ENCODE measurements at regions of chr5 and their contacts with region 1.

Region 1: GRCh38 chr5:138337685-138338410 is at the start of gene FAM53C:
- DNase-seq: peak in 3 of 4 experiments; percentile 56 to 95 (median 90)
- ATAC-seq: peak; percentile 93
- H3K4me3 ChIP-seq: peak within 1 kb of the TSS; percentile 63
- H3K27ac ChIP-seq: peak within 1 kb of the TSS; percentile 97
- H3K4me1 ChIP-seq: peaks cover 9 to 28% of the 10 kb centered on the region in 2 experiments
- H3K27me3 ChIP-seq: no peaks in the 10 kb centered on the region
- CTCF ChIP-seq: peak in 1 of 3 experiments; percentile 4; a peak in 2 of 6 replicates
- EP300 ChIP-seq: peak; percentile 15; the same call in 1 of the 2 replicates
- POLR2A ChIP-seq: peak; percentile 99
- RAD21 ChIP-seq: no peak
- polyA plus RNA-seq, gene FAM53C: 9.7 to 11.1 TPM

Region 2: GRCh38 chr5:138178516-138179276 is 159.2 kb before region 1 on chr5 and contains the starts of genes BRD8 and KIF20A:
- CTCF ChIA-PET with region 1: interaction called, 3 read pairs
- POLR2A ChIA-PET with region 1: interaction called, 17 read pairs
- in situ Hi-C with region 1: no loop called
- intact Hi-C with region 1: no loop called
- DNase-seq: peak; percentile 86 to 98 (median 91)
- ATAC-seq: peak; percentile 90
- H3K4me3 ChIP-seq: peak within 1 kb of the TSS; percentile 63
- H3K27ac ChIP-seq: peak within 1 kb of the TSS; percentile 99
- H3K4me1 ChIP-seq: peaks cover 0 to 5% of the 10 kb centered on the region in 2 experiments; a peak in 1 of 5 replicates
- H3K27me3 ChIP-seq: no peaks in the 10 kb centered on the region
- CTCF ChIP-seq: no peak; a peak in 1 of 6 replicates
- EP300 ChIP-seq: no peak
- POLR2A ChIP-seq: peak; percentile 94
- RAD21 ChIP-seq: no peak
- polyA plus RNA-seq, gene BRD8: 89.5 to 141 TPM
- polyA plus RNA-seq, gene KIF20A: 39.8 to 58.7 TPM

Region 3: GRCh38 chr5:138213161-138214029 is 124.5 kb before region 1 on chr5 and contains the start of gene CDC23:
- CTCF ChIA-PET with region 1: no interaction called
- POLR2A ChIA-PET with region 1: interaction called, 14 read pairs
- in situ Hi-C with region 1: no loop called
- intact Hi-C with region 1: no loop called
- DNase-seq: peak; percentile 93 to 99 (median 96)
- ATAC-seq: peak; percentile 98
- H3K4me3 ChIP-seq: peak within 1 kb of the TSS; percentile 88
- H3K27ac ChIP-seq: peak within 1 kb of the TSS; percentile 89
- H3K4me1 ChIP-seq: peaks cover 3 to 7% of the 10 kb centered on the region in 2 experiments; a peak in 3 of 5 replicates
- H3K27me3 ChIP-seq: no peaks in the 10 kb centered on the region
- CTCF ChIP-seq: no peak
- EP300 ChIP-seq: no peak
- POLR2A ChIP-seq: peak; percentile 96
- RAD21 ChIP-seq: no peak
- polyA plus RNA-seq, gene CDC23: 123 to 157 TPM

Region 4: DNA sequence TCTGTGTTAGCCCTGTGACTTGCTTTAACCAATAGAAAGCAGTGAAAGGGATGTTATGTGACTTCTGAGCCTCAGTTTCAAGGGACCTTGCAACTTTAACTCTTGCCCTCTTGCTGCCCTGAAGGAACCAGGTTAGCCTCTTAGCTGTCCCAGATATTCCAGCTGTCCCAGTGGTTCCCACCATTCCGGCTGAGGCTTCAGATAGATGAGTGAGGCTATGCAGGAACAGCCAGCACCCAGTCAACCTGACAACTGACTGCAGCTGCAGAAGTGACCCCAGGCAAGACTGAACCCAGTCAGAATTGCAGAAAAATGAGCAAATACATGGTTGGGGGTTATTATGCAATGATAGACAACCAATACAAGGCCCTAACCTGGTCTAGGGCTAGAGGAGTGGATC is 114.3 kb before region 1 on chr5:
- CTCF ChIA-PET with region 1: no interaction called
- POLR2A ChIA-PET with region 1: interaction called, 11 read pairs
- in situ Hi-C with region 1: no loop called
- intact Hi-C with region 1: no loop called
- DNase-seq: no peak
- ATAC-seq: no peak; the same call in 1 of the 3 replicates
- H3K4me3 ChIP-seq: no peak overlapping the region
- H3K27ac ChIP-seq: no peak overlapping the region
- H3K4me1 ChIP-seq: peaks cover 0 to 4% of the 10 kb centered on the region in 2 experiments; a peak in 2 of 5 replicates
- H3K27me3 ChIP-seq: no peaks in the 10 kb centered on the region
- CTCF ChIP-seq: no peak
- EP300 ChIP-seq: no peak
- POLR2A ChIP-seq: no peak
- RAD21 ChIP-seq: no peak

Region 5: GRCh38 chr5:138230981-138231589 is 106.8 kb before region 1 on chr5:
- CTCF ChIA-PET with region 1: no interaction called
- POLR2A ChIA-PET with region 1: interaction called, 10 read pairs
- in situ Hi-C with region 1: no loop called
- intact Hi-C with region 1: no loop called
- DNase-seq: peak in 2 of 4 experiments; percentile 43 to 44
- ATAC-seq: peak; percentile 62
- H3K4me3 ChIP-seq: no peak overlapping the region
- H3K27ac ChIP-seq: no peak overlapping the region
- H3K4me1 ChIP-seq: peaks cover 4 to 5% of the 10 kb centered on the region in 2 experiments; a peak in 2 of 5 replicates
- H3K27me3 ChIP-seq: peaks cover 0 to 5% of the 10 kb centered on the region in 2 experiments; a peak in 2 of 5 replicates
- CTCF ChIP-seq: no peak
- EP300 ChIP-seq: no peak
- POLR2A ChIP-seq: no peak
- RAD21 ChIP-seq: no peak

Region 6: DNA sequence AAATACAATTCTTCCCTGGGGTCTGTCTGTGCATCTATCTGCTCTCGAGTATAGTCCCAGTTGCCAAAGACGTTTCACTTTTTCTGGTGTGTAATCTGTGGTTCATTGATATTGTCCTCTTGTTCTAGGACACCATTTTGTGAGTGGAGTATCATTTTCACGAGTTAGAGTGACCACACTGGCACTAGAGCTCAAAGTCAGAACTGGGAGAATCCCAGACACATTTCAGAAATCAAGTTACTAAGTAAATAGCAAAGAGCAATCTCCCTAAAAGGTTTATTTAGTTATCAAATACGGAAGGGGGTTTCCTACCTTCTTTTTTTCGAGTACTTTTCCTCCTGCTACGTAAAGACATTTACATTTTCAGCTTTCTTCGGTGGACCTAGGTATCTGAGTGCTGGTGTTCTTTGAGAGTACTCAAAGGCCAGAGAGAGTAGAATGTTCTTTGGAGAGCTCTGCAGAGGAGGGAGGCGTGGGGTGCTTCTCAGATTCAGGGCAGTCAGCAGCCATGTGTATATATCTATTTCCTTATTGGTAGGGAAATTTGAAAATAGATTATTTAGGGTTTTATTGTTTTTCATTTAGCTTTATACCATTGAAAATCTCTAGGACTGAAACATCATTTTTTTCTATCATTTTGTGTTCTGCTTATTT is 246.3 kb after region 1 on chr5:
- CTCF ChIA-PET with region 1: no interaction called
- POLR2A ChIA-PET with region 1: no interaction called
- in situ Hi-C with region 1: no loop called
- intact Hi-C with region 1: no loop called
- DNase-seq: no peak
- ATAC-seq: no peak
- H3K4me3 ChIP-seq: no peak overlapping the region
- H3K27ac ChIP-seq: no peak overlapping the region
- H3K4me1 ChIP-seq: no peaks in the 10 kb centered on the region; a peak in 1 of 5 replicates
- H3K27me3 ChIP-seq: peaks cover 0 to 7% of the 10 kb centered on the region in 2 experiments; a peak in 1 of 5 replicates
- CTCF ChIP-seq: no peak
- EP300 ChIP-seq: no peak
- POLR2A ChIP-seq: no peak
- RAD21 ChIP-seq: no peak

Region 7: GRCh38 chr5:138900281-138900965 is 562.6 kb after region 1 on chr5:
- CTCF ChIA-PET with region 1: no interaction called
- POLR2A ChIA-PET with region 1: no interaction called
- in situ Hi-C with region 1: no loop called
- intact Hi-C with region 1: no loop called
- DNase-seq: peak in 2 of 4 experiments; percentile 22 to 41
- ATAC-seq: no peak
- H3K4me3 ChIP-seq: no peak overlapping the region
- H3K27ac ChIP-seq: no peak overlapping the region
- H3K4me1 ChIP-seq: peaks cover 0 to 8% of the 10 kb centered on the region in 2 experiments; a peak in 2 of 5 replicates
- H3K27me3 ChIP-seq: no peaks in the 10 kb centered on the region
- CTCF ChIP-seq: no peak
- EP300 ChIP-seq: peak; percentile 26; the same call in 1 of the 2 replicates
- POLR2A ChIP-seq: no peak
- RAD21 ChIP-seq: no peak